ENCODE measurements at regions of chr16 and their contacts with region 1.

Region 1: DNA sequence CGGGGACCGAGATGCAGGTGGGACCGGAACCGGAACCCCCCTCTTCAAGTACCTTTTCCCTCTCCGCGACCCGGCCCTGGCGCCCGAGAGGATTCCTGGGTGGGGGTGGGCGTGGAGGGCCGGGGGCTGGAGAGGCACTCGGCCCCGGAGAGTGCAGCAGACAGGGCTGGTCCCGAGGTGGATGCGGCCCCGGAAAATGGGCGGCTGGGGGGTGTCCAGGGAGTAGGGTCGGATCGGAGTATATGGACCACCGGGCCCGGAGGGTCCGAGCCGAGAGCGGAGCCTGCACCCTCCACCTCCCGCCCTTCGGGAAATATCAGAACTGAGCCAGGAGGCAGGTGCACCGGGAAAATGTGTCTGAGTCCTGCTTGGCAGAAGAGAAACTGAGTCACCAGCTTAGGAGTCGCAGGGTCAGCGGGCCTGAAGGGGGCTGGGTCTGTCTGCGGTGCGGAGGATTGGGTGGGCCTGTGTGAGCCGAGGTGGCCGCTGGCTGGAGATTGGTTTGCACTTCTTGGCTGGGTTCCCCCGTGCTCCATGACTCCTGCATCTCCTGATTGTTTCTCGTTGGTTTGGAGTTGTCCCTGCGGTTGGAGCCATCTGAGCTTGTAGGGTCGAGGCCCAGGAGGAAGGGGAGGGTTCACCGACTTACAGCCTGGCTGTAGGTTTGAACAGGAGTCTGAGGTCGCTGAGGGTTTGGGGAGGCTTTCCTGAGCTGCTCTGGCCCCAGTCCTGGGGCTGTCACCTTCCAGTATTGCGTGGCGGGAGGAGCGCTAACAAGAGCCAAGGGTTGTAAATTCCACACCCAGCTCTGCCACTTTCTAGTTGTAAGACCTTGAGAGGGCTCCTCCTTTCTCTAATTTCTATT is 518 bp downstream of the SH2B1 start:
- DNase-seq: no peak
- ATAC-seq: peak; percentile 36
- H3K4me3 ChIP-seq: peak overlapping the region; percentile 85 to 98 (median 95)
- H3K27ac ChIP-seq: peak overlapping the region; percentile 99
- H3K4me1 ChIP-seq: peaks cover 36% of the 10 kb centered on the region
- H3K27me3 ChIP-seq: no peaks in the 10 kb centered on the region; a peak in 1 of 5 replicates
- CTCF ChIP-seq: no peak
- EP300 ChIP-seq: no peak; a peak in 1 of 4 replicates
- POLR2A ChIP-seq: no peak
- RAD21 ChIP-seq: no peak

Region 2: DNA sequence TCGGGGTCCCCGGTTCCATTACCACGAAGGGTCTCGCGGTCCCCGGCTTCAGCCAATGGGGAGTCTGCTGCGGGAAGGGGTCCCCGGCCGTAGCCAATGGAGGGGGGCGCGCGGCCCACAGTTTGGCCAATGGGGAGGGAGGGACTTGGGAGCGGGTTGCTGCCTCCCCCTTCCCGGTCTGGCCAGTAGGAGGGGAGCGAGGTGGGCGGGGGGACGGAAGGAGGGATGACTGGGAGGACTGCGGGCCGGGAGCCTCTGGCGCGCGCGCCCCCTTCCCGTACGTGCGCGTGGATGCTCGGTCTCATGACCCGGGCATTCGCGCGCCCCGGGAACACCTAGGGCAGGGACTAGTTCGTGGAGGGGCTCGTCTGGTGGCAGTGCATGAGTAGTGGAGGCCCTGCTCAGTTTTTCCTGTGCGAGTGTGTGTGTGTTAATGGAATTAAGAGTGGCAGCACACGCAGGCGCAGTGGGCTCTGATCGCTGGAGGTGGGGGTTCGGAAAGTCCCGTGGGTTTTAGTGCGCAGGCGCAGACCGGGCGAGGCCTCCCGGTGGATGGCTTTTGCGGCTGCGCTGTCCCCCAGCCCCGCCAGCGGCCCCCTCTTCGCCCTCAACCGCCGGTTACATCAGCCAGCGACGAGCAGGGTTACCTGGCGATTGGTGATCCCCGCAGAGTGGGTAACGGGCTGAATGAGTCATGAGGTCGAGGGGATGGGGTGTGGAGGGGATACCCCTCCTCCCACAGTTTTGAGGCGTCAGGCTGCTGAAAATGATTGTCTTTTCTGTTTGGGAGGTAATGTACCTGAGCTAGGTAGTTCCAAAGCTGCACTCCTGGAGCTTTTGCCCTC is 40.1 kb before region 1 on chr16:
- CTCF ChIA-PET with region 1: no interaction called
- POLR2A ChIA-PET with region 1: interaction called, 85 read pairs
- in situ Hi-C with region 1: no loop called
- intact Hi-C with region 1: no loop called
- DNase-seq: peak; percentile 97
- ATAC-seq: peak; percentile 91
- H3K4me3 ChIP-seq: peak overlapping the region; percentile 77 to 99 (median 89)
- H3K27ac ChIP-seq: peak overlapping the region; percentile 97
- H3K4me1 ChIP-seq: peaks cover 52% of the 10 kb centered on the region
- H3K27me3 ChIP-seq: no peaks in the 10 kb centered on the region; a peak in 1 of 5 replicates
- CTCF ChIP-seq: peak; percentile 57
- EP300 ChIP-seq: peak in 1 of 2 experiments; percentile 6; a peak in 1 of 4 replicates
- POLR2A ChIP-seq: peak; percentile 71 to 76
- RAD21 ChIP-seq: no peak

Region 3: GRCh38 chr16:28891964-28892890 is 28.1 kb after region 1 on chr16:
- CTCF ChIA-PET with region 1: no interaction called
- POLR2A ChIA-PET with region 1: interaction called, 21 read pairs
- in situ Hi-C with region 1: no loop called
- intact Hi-C with region 1: no loop called
- DNase-seq: no peak
- ATAC-seq: no peak
- H3K4me3 ChIP-seq: no peak overlapping the region
- H3K27ac ChIP-seq: no peak overlapping the region
- H3K4me1 ChIP-seq: peaks cover 26% of the 10 kb centered on the region
- H3K27me3 ChIP-seq: no peaks in the 10 kb centered on the region
- CTCF ChIP-seq: no peak
- EP300 ChIP-seq: no peak
- POLR2A ChIP-seq: no peak
- RAD21 ChIP-seq: no peak

Region 4: DNA sequence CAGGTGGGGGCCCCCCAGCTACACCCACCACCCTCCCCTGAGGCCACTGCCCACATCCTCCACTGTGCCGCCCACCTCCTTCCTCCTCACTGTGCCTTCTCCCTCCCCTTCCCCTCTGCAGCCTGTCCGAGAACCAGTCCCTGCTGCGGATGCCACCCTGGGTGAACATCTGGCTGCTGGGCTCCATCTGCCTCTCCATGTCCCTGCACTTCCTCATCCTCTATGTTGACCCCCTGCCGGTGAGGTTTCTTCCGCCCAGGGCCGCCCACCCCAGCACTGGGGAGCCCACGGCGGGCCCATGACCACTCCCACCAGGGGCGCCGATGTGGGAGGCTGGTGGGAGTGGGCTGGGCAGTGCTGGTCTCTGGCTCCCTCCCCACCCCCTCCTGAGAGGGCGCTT is 38.7 kb after region 1 on chr16:
- CTCF ChIA-PET with region 1: no interaction called
- POLR2A ChIA-PET with region 1: no interaction called
- in situ Hi-C with region 1: no loop called
- intact Hi-C with region 1: no loop called
- DNase-seq: no peak
- ATAC-seq: peak; percentile 2; the same call in 2 of the 3 replicates
- H3K4me3 ChIP-seq: no peak overlapping the region
- H3K27ac ChIP-seq: no peak overlapping the region
- H3K4me1 ChIP-seq: no peaks in the 10 kb centered on the region
- H3K27me3 ChIP-seq: no peaks in the 10 kb centered on the region
- CTCF ChIP-seq: no peak
- EP300 ChIP-seq: no peak
- POLR2A ChIP-seq: peak in 1 of 2 experiments; percentile 24; a peak in 1 of 4 replicates
- RAD21 ChIP-seq: no peak

Region 5: GRCh38 chr16:28935924-28936783 is 72.0 kb after region 1 on chr16:
- CTCF ChIA-PET with region 1: no interaction called
- POLR2A ChIA-PET with region 1: interaction called, 44 read pairs
- in situ Hi-C with region 1: loop called (anchors 5 kb)
- intact Hi-C with region 1: no loop called
- DNase-seq: peak; percentile 88
- ATAC-seq: peak; percentile 93
- H3K4me3 ChIP-seq: peak overlapping the region; percentile 28 to 69 (median 40)
- H3K27ac ChIP-seq: peak overlapping the region; percentile 43
- H3K4me1 ChIP-seq: peaks cover 63% of the 10 kb centered on the region
- H3K27me3 ChIP-seq: no peaks in the 10 kb centered on the region
- CTCF ChIP-seq: peak; percentile 47
- EP300 ChIP-seq: no peak
- POLR2A ChIP-seq: peak; percentile 19 to 40; a peak in 1 of 4 replicates
- RAD21 ChIP-seq: no peak

Region 6: DNA sequence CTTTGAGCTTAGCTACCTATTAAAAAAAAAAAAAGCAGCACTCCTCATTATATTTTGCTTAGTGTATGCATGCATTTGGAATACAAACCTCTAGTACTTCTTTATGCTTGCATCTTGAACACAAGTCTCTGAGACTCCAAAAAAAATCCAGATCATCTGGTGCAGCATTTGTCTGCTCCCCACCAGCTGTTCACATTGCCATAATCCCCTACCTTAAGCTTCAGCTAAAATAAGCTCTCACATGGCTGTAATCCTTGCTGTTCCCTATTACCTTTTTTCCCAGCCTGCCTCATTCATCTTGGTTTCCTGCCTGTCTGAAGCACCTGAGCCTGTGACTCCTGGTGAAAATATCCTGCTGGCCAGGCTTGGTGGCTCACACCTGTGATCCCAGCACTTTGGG is 79.1 kb after region 1 on chr16:
- CTCF ChIA-PET with region 1: interaction called, 3 read pairs
- POLR2A ChIA-PET with region 1: interaction called, 44 read pairs
- in situ Hi-C with region 1: loop called (anchors 5 kb)
- intact Hi-C with region 1: loop called (anchors 1 kb)
- DNase-seq: no peak
- ATAC-seq: no peak
- H3K4me3 ChIP-seq: no peak overlapping the region
- H3K27ac ChIP-seq: no peak overlapping the region
- H3K4me1 ChIP-seq: peaks cover 28% of the 10 kb centered on the region
- H3K27me3 ChIP-seq: no peaks in the 10 kb centered on the region
- CTCF ChIP-seq: no peak
- EP300 ChIP-seq: no peak
- POLR2A ChIP-seq: no peak
- RAD21 ChIP-seq: no peak

Region 7: DNA sequence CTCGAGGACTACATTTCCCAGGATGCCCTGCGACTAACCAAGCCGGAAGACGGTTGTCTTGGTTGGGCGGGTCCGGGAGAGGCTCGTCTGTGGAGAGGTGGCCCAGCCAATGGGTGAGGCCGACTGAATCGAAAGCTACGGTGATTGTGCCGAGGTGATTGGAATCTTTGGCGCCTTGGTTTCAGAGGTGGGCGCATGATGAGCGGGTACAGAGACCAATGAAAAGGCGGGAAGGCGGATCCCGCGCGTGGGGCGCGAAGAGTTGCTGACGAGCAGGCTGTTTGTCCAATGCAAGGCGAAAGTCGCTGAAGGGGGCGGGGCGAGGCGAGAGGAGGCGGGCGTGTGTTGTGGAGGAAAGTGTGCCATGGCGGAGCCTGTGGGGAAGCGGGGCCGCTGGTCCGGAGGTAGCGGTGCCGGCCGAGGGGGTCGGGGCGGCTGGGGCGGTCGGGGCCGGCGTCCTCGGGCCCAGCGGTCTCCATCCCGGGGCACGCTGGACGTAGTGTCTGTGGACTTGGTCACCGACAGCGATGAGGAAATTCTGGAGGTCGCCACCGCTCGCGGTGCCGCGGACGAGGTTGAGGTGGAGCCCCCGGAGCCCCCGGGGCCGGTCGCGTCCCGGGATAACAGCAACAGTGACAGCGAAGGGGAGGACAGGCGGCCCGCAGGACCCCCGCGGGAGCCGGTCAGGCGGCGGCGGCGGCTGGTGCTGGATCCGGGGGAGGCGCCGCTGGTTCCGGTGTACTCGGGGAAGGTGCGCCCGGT is 86.7 kb after region 1 on chr16 and contains the start of gene NFATC2IP:
- CTCF ChIA-PET with region 1: interaction called, 3 read pairs
- POLR2A ChIA-PET with region 1: interaction called, 44 read pairs
- in situ Hi-C with region 1: no loop called
- intact Hi-C with region 1: no loop called
- DNase-seq: peak; percentile 100
- ATAC-seq: peak; percentile 97
- H3K4me3 ChIP-seq: peak within 1 kb of the TSS; percentile 93 to 99 (median 97)
- H3K27ac ChIP-seq: peak within 1 kb of the TSS; percentile 67
- H3K4me1 ChIP-seq: peaks cover 49% of the 10 kb centered on the region
- H3K27me3 ChIP-seq: no peaks in the 10 kb centered on the region; a peak in 1 of 5 replicates
- CTCF ChIP-seq: no peak
- EP300 ChIP-seq: no peak
- POLR2A ChIP-seq: peak; percentile 63 to 89
- RAD21 ChIP-seq: peak; percentile 28; the same call in 1 of the 2 replicates
- total RNA-seq, gene NFATC2IP: 18.2 and 32.1 TPM in 2 replicates

Measured in HepG2 (cell line).